ENCODE measurements at regions of chr21 and their contacts with region 1.

Region 1: DNA sequence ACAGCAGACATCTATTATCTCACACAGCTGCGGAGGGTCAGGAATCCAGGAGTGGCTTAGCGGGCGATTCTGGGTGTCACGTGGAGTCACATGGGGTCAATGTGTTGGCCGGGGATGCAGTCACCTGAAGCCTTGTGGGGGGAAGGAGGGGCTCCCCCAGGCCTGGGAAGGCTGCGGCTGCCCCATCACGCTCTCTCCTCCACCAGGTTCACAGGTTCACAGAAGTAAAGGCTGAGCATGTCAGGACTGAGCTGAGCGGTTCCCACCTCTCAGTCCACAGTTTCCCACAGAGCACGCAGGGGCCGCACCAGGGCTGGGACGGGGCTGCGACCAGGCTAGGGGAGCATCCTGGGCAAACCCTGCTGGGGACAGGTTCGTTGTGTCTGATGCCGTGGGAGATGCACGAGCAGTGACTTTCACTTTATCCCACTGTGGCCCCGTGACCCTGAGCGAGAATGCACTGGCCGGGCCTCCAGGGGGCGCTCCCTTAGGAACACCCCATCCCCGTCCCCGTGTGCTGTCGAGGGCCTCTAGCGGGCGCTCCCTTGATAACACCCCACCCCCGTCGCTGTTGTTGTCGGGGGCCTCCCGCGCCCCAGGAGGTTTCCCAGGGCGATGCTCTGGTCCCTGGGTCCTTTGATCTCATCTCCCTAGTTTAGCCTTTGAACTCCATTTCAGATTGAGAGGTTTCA is 73.2 kb upstream of the TRAPPC10 start:
- DNase-seq: peak; percentile 79 to 91 (median 83)
- ATAC-seq: peak; percentile 72 to 91 (median 88)
- H3K4me3 ChIP-seq: peak overlapping the region in 10 of 12 donors; percentile 27 to 59 (median 44)
- H3K27ac ChIP-seq: peak overlapping the region in 7 of 12 donors; percentile 21 to 74 (median 55)
- H3K4me1 ChIP-seq: peaks cover 2 to 29% (median 19%) of the 10 kb centered on the region in 12 donors
- H3K27me3 ChIP-seq: no peaks in the 10 kb centered on the region
- CTCF ChIP-seq: peak; percentile 88 to 96 (median 94)
- POLR2A ChIP-seq: peak in 1 of 2 donors; percentile 31

Region 2: GRCh38 chr21:43789276-43790009 is 149.5 kb before region 1 on chr21 and contains the start of gene RRP1:
- intact Hi-C with region 1: loop called in 1 of 10 experiments (anchors 1 kb)
- DNase-seq: peak; percentile 89 to 97 (median 93)
- ATAC-seq: peak; percentile 83 to 96 (median 96)
- H3K4me3 ChIP-seq: peak within 1 kb of the TSS; percentile 75 to 97 (median 86)
- H3K27ac ChIP-seq: peak within 1 kb of the TSS in 11 of 12 donors; percentile 65 to 95 (median 89)
- H3K4me1 ChIP-seq: peaks cover 0 to 20% (median 13%) of the 10 kb centered on the region in 12 donors
- H3K27me3 ChIP-seq: no peaks in the 10 kb centered on the region
- CTCF ChIP-seq: peak; percentile 95 to 100 (median 100)
- POLR2A ChIP-seq: peak in 1 of 2 donors; percentile 90
- total RNA-seq, gene RRP1: 6.0 to 15.6 (median 9.8) TPM

Region 3: GRCh38 chr21:43805275-43805800 is 133.6 kb before region 1 on chr21:
- intact Hi-C with region 1: loop called in 3 of 10 experiments (anchors 1 to 5 kb)
- DNase-seq: peak in 2 of 5 donors; percentile 19 to 27
- ATAC-seq: no peak
- H3K4me3 ChIP-seq: no peak overlapping the region
- H3K27ac ChIP-seq: peak overlapping the region in 1 of 12 donors; percentile 58
- H3K4me1 ChIP-seq: no peaks in the 10 kb centered on the region
- H3K27me3 ChIP-seq: no peaks in the 10 kb centered on the region
- CTCF ChIP-seq: no peak
- POLR2A ChIP-seq: no peak

Measured in heart left ventricle (tissue), 16 donors.